ENCODE measurements at regions of chr17 and their contacts with region 1.

Region 1: GRCh38 chr17:9968902-9969617 is 64.0 kb upstream of the RCVRN start:
- DNase-seq: peak; percentile 91
- ATAC-seq: peak; percentile 70
- H3K4me3 ChIP-seq: no peak overlapping the region
- H3K27ac ChIP-seq: no peak overlapping the region
- H3K4me1 ChIP-seq: peaks cover 15% of the 10 kb centered on the region; the same call in 1 of the 2 replicates
- H3K27me3 ChIP-seq: no peaks in the 10 kb centered on the region
- CTCF ChIP-seq: no peak
- POLR2A ChIP-seq: no peak
- RAD21 ChIP-seq: no peak

Region 2: GRCh38 chr17:10018461-10018891 is 49.4 kb after region 1 on chr17:
- CTCF ChIA-PET with region 1: no interaction called
- POLR2A ChIA-PET with region 1: no interaction called
- dilution Hi-C with region 1: no loop called
- in situ Hi-C with region 1: no loop called
- intact Hi-C with region 1: no loop called
- DNase-seq: no peak
- ATAC-seq: no peak
- H3K4me3 ChIP-seq: no peak overlapping the region
- H3K27ac ChIP-seq: no peak overlapping the region
- H3K4me1 ChIP-seq: peaks cover 2% of the 10 kb centered on the region; the same call in 1 of the 2 replicates
- H3K27me3 ChIP-seq: no peaks in the 10 kb centered on the region
- CTCF ChIP-seq: no peak
- POLR2A ChIP-seq: no peak
- RAD21 ChIP-seq: no peak

Region 3: GRCh38 chr17:10105513-10106001 is 136.5 kb after region 1 on chr17:
- CTCF ChIA-PET with region 1: no interaction called
- POLR2A ChIA-PET with region 1: no interaction called
- dilution Hi-C with region 1: no loop called
- in situ Hi-C with region 1: no loop called
- intact Hi-C with region 1: no loop called
- DNase-seq: peak; percentile 90
- ATAC-seq: peak; percentile 94
- H3K4me3 ChIP-seq: no peak overlapping the region
- H3K27ac ChIP-seq: peak overlapping the region; percentile 51
- H3K4me1 ChIP-seq: peaks cover 9% of the 10 kb centered on the region
- H3K27me3 ChIP-seq: no peaks in the 10 kb centered on the region
- CTCF ChIP-seq: no peak
- POLR2A ChIP-seq: no peak
- RAD21 ChIP-seq: no peak; the same call in 1 of the 2 replicates

Region 4: GRCh38 chr17:10127819-10128425 is 158.9 kb after region 1 on chr17:
- CTCF ChIA-PET with region 1: interaction called, 3 read pairs
- POLR2A ChIA-PET with region 1: no interaction called
- dilution Hi-C with region 1: no loop called
- in situ Hi-C with region 1: no loop called
- intact Hi-C with region 1: loop called (anchors 5 kb)
- DNase-seq: peak; percentile 99
- ATAC-seq: peak; percentile 81
- H3K4me3 ChIP-seq: no peak overlapping the region
- H3K27ac ChIP-seq: peak overlapping the region; percentile 99
- H3K4me1 ChIP-seq: peaks cover 33% of the 10 kb centered on the region
- H3K27me3 ChIP-seq: no peaks in the 10 kb centered on the region
- CTCF ChIP-seq: peak; percentile 28; the same call in 1 of the 2 replicates
- POLR2A ChIP-seq: no peak; the same call in none of the 2 replicates
- RAD21 ChIP-seq: peak; percentile 55

Region 5: DNA sequence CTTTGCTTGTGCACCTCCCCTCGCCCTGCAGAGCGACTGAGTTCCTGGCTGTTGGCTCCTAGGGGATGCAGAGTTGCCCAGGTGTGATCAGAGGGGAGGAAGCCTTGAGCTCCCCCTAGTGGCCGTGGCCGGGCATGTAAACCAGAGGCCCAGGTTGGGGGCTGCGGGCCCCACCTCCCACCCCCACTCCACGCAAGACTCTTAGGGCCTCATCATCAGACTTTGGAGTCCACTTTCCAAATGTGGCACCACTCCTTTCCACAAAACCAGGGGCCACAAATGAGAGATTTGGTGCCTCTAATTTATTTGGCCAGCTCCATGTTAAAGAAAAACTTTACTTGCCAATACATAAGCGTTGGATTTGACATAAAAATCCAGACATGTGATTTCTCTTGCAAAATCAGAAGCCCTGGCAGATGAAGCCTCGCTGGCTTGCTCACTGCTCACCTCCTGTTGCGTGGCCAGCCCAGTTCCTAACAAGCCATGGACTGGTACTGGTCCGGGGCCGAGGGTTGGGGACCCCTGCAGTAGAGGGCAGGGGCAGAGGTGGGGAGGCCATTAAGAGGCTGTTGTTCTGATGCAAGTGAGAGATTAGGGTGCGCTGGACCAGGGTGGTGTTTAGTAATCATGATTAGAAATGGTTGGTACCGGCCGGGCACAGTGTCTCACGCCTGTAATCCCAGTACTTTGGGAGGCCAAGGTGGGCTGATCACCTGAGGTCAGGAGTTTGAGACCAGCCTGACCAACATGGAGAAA is 258.0 kb after region 1 on chr17:
- CTCF ChIA-PET with region 1: interaction called, 11 read pairs
- POLR2A ChIA-PET with region 1: no interaction called
- dilution Hi-C with region 1: no loop called
- in situ Hi-C with region 1: loop called (anchors 10 kb)
- intact Hi-C with region 1: loop called (anchors 1 kb)
- DNase-seq: peak; percentile 22
- ATAC-seq: peak; percentile 82
- H3K4me3 ChIP-seq: no peak overlapping the region
- H3K27ac ChIP-seq: no peak overlapping the region
- H3K4me1 ChIP-seq: peaks cover 2% of the 10 kb centered on the region; the same call in 1 of the 2 replicates
- H3K27me3 ChIP-seq: no peaks in the 10 kb centered on the region
- CTCF ChIP-seq: peak; percentile 73
- POLR2A ChIP-seq: no peak
- RAD21 ChIP-seq: peak; percentile 76

Region 6: DNA sequence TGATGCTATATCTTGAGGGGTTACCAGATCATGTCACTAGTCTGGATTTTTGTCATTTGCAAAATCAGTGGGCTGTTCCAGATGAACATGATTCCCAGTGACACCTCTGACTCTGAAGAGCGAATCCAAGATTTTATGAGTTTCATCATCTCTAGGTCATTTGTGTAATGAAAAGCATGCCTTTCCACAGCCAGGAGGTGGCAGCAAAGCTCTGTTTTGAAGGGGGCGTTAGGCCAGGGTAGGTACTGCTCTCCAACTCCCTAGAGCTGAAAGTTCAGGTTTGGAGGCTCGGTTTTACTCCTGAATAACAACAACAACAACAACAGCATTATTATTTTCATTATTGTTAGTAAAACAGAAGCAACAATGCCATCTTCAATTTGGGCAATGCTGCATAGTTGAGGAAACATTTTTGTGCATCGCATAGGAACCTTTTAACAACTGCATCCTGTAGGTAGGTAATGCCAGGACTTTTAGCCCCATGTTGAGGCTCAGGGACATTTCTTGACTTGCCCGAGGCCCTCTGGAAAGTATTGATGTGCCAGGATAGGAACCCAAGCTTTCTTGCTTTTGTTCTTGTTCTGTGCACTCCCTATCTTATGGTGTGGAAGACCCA is 326.8 kb after region 1 on chr17:
- CTCF ChIA-PET with region 1: no interaction called
- POLR2A ChIA-PET with region 1: no interaction called
- dilution Hi-C with region 1: no loop called
- in situ Hi-C with region 1: no loop called
- intact Hi-C with region 1: loop called (anchors 5 kb)
- DNase-seq: peak; percentile 33
- ATAC-seq: peak; percentile 73
- H3K4me3 ChIP-seq: no peak overlapping the region
- H3K27ac ChIP-seq: no peak overlapping the region
- H3K4me1 ChIP-seq: no peaks in the 10 kb centered on the region; the same call in 1 of the 2 replicates
- H3K27me3 ChIP-seq: 0 out of 2 replicates have a peak, but pooled peaks cover 2% of the 10 kb centered on the region
- CTCF ChIP-seq: peak; percentile 66
- POLR2A ChIP-seq: no peak
- RAD21 ChIP-seq: peak; percentile 61

Region 7: GRCh38 chr17:10314329-10314728 is 345.3 kb after region 1 on chr17:
- CTCF ChIA-PET with region 1: no interaction called
- POLR2A ChIA-PET with region 1: no interaction called
- dilution Hi-C with region 1: no loop called
- in situ Hi-C with region 1: no loop called
- intact Hi-C with region 1: loop called (anchors 5 kb)
- DNase-seq: no peak
- ATAC-seq: no peak
- H3K4me3 ChIP-seq: no peak overlapping the region
- H3K27ac ChIP-seq: no peak overlapping the region
- H3K4me1 ChIP-seq: peaks cover 2% of the 10 kb centered on the region; the same call in 1 of the 2 replicates
- H3K27me3 ChIP-seq: peaks cover 1% of the 10 kb centered on the region; the same call in 1 of the 2 replicates
- CTCF ChIP-seq: no peak
- POLR2A ChIP-seq: no peak
- RAD21 ChIP-seq: no peak

Region 8: GRCh38 chr17:10327640-10328039 is 358.6 kb after region 1 on chr17:
- CTCF ChIA-PET with region 1: no interaction called
- POLR2A ChIA-PET with region 1: no interaction called
- dilution Hi-C with region 1: no loop called
- in situ Hi-C with region 1: no loop called
- intact Hi-C with region 1: loop called (anchors 1 kb)
- DNase-seq: peak; percentile 73
- ATAC-seq: peak; percentile 97
- H3K4me3 ChIP-seq: no peak overlapping the region
- H3K27ac ChIP-seq: no peak overlapping the region
- H3K4me1 ChIP-seq: no peaks in the 10 kb centered on the region
- H3K27me3 ChIP-seq: peaks cover 1% of the 10 kb centered on the region; the same call in 1 of the 2 replicates
- CTCF ChIP-seq: peak; percentile 81
- POLR2A ChIP-seq: no peak
- RAD21 ChIP-seq: peak; percentile 83